ENCODE measurements at regions of chr1 and their contacts with region 1.

Region 1: DNA sequence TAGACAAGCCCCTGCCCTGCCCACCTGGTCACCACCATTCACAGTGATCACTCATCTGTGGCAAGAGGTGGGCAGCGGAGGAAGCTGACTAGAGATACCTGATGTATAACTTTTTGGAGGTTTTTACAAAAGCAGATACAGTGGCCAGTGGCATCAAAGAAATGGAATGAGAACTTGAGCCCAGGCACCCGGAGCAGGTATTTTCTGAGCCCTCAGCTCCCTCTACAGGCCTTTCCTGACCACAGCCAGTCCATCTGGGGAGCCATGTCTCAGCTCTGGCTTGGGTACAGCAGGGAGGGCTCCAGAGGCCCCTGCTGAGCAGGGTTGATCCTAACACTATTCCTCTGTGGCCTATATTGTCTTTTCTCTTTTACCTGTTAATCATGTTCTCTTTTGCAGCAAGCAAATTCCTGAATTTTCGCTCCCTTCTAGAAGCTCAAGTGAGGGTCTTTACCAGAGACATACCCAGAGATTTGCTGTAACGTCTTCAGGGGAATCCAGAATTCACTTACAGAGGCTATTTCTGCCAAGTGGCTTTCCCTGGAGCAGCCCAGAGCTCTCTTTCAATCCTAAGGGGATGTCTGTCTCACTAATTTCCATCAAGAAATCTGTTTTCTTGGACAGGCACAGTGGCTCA is 27.3 kb downstream of the GPR157 start:
- DNase-seq: peak; percentile 16
- H3K4me3 ChIP-seq: no peak overlapping the region
- CTCF ChIP-seq: peak; percentile 87

Region 2: DNA sequence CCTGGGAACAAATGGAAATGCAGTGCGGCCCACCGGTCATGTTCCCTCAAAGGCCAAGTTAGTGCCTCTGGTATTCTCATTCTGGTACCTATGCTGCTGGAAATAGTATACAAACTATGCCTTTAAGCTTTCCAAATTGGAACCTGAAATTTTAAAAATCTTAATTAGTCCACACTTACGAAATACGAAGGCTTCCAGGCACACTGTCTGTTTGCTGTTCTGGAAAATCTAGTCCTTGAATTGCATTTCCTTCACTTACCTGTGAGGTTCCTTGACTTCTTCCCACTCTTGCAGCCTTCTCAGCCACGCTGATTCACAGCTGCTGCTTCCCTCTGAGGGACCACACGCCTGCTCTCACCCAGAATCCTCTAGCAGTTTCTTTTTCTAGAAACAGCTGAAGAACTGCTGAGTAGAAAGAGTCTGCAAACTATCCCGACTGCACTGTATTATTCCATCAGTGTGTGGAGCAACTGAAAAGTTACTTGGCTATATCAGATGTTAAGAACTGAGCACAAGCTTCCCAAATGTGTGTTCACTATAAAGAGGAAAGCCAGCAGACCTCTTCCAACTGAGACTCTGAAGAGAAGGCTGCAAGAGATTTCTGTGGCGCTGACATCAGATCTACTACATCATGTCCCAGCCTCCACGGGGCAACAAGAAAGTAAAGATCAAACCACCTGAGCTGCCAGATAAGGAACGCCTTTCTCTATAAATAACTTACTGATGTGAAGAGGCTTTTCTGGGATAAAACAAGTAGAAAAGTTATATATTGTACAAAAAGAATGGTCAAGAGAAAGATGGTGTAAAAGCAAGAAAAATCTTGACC is 510.9 kb before region 1 on chr1:
- CTCF ChIA-PET with region 1: no interaction called
- POLR2A ChIA-PET with region 1: no interaction called
- DNase-seq: no peak
- H3K4me3 ChIP-seq: no peak overlapping the region
- CTCF ChIP-seq: no peak

Region 3: GRCh38 chr1:8910914-8911313 is 190.7 kb before region 1 on chr1:
- CTCF ChIA-PET with region 1: interaction called, 267 read pairs
- POLR2A ChIA-PET with region 1: no interaction called
- DNase-seq: no peak
- H3K4me3 ChIP-seq: no peak overlapping the region
- CTCF ChIP-seq: no peak

Region 4: GRCh38 chr1:8987881-8988617 is 113.6 kb before region 1 on chr1:
- CTCF ChIA-PET with region 1: interaction called, 53 read pairs
- POLR2A ChIA-PET with region 1: no interaction called
- DNase-seq: no peak
- H3K4me3 ChIP-seq: no peak overlapping the region
- CTCF ChIP-seq: peak; percentile 86

Region 5: DNA sequence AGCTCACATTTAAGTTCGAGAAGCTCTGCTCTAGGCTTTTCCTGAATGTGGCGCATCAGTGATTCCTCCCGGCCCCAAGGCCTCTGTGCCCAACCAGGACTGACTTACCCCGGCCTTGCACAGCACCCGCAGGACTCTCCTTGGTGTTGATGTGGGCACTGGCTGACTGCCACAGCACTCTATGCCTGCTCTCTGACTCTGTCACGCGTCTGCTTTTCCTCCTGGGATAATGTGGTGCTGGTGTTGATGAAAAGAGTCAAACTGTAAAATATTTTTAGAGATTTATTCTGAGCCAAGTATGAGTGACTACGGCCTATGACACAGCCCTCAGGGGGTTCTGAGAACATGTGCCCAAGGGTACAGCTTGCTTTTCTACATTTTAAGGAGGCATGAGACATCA is 16.7 kb before region 1 on chr1:
- CTCF ChIA-PET with region 1: interaction called, 10 read pairs
- POLR2A ChIA-PET with region 1: no interaction called
- DNase-seq: no peak
- H3K4me3 ChIP-seq: no peak overlapping the region
- CTCF ChIP-seq: no peak

Region 6: DNA sequence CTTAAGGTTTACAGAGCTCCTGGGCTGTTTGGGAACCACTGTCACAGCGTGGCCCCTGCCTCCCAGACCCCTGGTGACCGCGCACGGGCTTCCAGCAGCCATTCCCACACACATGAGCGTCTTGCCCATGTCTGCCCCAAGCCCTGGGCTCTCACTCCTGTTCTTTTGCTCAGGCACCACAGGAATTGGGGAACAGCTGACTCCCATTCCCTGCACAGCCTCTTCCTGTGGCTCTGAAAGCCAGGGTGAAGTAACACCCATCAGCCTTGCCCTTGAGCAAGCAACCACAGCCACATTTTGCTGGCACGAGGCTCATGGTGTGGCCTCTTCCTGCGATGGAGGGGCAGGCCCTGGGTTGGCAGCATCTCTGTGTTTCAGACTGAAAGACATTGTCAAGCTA is 41.6 kb after region 1 on chr1:
- CTCF ChIA-PET with region 1: no interaction called
- POLR2A ChIA-PET with region 1: no interaction called
- DNase-seq: no peak
- H3K4me3 ChIP-seq: no peak overlapping the region
- CTCF ChIP-seq: no peak

Region 7: DNA sequence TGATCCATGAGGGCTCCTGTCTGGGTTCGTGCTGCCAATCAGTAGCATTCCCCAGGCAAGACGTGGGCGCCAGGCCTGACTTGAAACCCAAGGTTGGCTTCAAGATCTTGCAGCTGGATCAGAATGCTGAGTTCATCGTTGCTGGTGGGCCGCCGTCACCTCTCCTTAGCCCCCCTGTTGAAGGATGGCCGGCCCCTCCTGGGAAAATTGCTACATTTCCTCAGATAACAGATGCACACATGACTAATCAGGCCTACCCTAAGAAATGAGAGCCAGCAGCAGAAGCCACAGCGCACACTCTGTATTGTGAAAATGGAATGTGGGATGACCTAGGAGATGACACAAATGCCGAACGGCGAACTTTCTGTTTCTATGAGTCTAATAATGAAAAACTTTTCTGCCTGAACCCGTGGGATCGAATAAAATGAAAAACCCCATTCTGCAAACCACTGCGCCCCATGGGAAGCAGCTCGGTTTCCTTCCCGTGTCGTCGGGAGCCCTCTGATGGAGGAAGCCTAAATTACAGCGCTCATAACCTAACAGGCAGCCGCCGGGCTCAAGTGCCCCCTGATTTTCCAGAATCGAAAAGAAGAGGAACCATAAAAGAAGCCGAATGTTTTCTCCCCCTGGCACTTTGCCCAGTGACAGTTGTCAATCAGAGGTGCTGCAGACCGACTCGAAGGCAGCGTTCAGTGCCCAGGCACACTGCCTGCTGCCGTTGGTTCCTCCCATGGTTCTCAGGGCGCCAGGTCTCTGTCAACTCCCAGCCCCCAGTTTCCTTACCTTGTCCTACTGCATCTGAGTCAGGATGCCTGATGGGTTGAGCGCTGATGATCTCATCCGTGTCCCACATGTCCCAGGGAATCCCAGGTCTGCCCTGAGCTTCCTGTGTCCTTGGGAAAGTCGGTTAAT is 94.8 kb after region 1 on chr1:
- CTCF ChIA-PET with region 1: interaction called, 13 read pairs
- POLR2A ChIA-PET with region 1: interaction called, 3 read pairs
- DNase-seq: no peak
- H3K4me3 ChIP-seq: peak overlapping the region; percentile 12
- CTCF ChIP-seq: peak; percentile 69